ENCODE measurements at regions of chr1 and their contacts with region 1.

Region 1: GRCh38 chr1:46223472-46223943 is 20.4 kb downstream of the LURAP1 start:
- DNase-seq: peak; percentile 75 to 83
- ATAC-seq: peak; percentile 84
- H3K4me3 ChIP-seq: no peak overlapping the region
- H3K27ac ChIP-seq: peak overlapping the region in 1 of 2 donors; percentile 8
- H3K4me1 ChIP-seq: no peaks in the 10 kb centered on the region
- H3K27me3 ChIP-seq: no peaks in the 10 kb centered on the region

Region 2: DNA sequence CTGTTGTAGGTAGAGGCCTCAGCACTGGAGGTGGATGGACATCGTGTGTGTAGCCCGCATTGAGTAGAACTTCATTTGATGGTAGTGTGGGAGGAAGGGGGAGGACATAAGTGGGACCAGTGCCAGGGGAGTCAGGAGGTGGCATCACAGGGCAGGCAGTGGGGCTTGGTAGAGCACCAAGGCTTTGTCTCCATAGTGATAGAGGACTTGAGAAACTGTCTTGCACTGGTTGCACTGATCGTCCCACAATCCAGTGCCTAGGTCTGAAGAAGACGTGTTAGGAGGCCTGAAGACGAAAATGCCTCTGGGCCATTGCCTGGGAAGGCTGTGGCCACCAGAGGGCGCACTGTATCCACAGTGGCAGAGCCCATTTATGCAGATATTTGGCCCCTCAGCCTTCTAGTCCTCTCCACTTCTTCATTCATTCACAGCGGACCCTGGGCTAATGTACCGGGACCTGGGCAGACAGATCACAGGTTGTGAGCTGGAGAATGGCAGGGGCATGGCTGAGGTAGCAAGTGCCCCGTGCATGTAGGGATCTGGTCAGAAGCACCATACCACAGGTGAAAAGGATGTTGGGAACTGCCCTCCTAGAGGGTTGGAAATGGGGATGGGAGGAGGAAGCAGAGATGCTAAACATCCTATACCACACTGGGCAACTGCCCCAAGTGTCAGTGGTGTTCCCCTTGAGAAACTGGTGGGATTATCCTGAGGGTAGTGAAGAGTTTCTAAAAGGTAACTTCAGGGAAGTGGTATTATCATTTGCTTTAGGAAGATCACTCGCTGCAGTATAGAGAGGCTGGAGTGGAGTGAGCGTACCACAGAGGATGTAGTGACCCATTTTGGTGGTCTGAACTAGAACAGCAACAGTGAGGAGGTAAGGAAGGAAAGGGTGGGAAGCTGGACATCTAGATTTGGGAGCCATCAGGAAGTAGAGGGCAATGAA is 186.3 kb before region 1 on chr1:
- intact Hi-C with region 1: loop called (anchors 2 kb)
- DNase-seq: peak; percentile 90 to 96
- ATAC-seq: peak; percentile 89
- H3K4me3 ChIP-seq: no peak overlapping the region
- H3K27ac ChIP-seq: no peak overlapping the region
- H3K4me1 ChIP-seq: no peaks in the 10 kb centered on the region
- H3K27me3 ChIP-seq: no peaks in the 10 kb centered on the region

Region 3: GRCh38 chr1:46152016-46152415 is 71.5 kb before region 1 on chr1:
- intact Hi-C with region 1: no loop called
- DNase-seq: no peak
- ATAC-seq: no peak
- H3K4me3 ChIP-seq: no peak overlapping the region
- H3K27ac ChIP-seq: no peak overlapping the region
- H3K4me1 ChIP-seq: peaks cover 0 to 1% of the 10 kb centered on the region in 2 donors
- H3K27me3 ChIP-seq: no peaks in the 10 kb centered on the region

Region 4: DNA sequence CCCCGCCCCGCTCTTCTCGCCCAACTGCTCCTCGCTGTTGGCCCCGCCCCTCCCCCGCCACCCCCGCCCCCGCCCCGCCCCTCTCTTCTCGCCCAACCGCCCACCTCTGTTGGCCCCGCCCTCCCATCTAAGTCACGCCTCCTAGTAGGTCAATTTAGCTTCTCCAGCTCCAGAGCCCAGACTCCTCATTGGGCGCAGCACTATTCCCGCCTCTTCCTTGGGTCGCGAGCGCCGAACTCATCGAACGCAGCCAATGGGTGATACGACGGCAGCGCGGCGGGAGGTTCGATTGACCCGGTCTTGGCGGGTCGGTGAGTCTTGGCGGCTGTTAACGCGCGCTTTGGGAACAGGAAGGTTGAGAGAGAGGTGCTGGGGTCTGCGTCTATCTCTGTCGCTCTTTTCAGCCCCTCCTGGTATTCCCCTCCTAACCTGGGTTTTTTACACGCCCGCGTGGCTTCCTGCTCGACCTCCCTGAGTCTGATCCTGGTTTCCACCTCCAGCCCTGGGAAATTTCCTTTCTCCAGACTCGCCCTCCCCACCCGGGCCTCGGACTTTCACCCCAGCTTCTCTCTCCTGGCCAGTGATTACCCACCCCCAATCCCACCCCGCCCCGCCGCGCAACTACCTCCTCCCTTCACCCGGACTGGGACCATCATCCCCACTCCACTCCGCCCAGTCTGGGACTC is 24.1 kb after region 1 on chr1 and contains the start of gene RAD54L:
- intact Hi-C with region 1: no loop called
- DNase-seq: peak; percentile 98 to 99
- ATAC-seq: peak; percentile 98
- H3K4me3 ChIP-seq: peak within 1 kb of the TSS; percentile 52 to 97
- H3K27ac ChIP-seq: peak within 1 kb of the TSS in 1 of 2 donors; percentile 30
- H3K4me1 ChIP-seq: no peaks in the 10 kb centered on the region
- H3K27me3 ChIP-seq: no peaks in the 10 kb centered on the region
- total RNA-seq, gene RAD54L: 1.6 to 2.3 TPM